ENCODE measurements at regions of chr6 and their contacts with region 1.

Region 1: DNA sequence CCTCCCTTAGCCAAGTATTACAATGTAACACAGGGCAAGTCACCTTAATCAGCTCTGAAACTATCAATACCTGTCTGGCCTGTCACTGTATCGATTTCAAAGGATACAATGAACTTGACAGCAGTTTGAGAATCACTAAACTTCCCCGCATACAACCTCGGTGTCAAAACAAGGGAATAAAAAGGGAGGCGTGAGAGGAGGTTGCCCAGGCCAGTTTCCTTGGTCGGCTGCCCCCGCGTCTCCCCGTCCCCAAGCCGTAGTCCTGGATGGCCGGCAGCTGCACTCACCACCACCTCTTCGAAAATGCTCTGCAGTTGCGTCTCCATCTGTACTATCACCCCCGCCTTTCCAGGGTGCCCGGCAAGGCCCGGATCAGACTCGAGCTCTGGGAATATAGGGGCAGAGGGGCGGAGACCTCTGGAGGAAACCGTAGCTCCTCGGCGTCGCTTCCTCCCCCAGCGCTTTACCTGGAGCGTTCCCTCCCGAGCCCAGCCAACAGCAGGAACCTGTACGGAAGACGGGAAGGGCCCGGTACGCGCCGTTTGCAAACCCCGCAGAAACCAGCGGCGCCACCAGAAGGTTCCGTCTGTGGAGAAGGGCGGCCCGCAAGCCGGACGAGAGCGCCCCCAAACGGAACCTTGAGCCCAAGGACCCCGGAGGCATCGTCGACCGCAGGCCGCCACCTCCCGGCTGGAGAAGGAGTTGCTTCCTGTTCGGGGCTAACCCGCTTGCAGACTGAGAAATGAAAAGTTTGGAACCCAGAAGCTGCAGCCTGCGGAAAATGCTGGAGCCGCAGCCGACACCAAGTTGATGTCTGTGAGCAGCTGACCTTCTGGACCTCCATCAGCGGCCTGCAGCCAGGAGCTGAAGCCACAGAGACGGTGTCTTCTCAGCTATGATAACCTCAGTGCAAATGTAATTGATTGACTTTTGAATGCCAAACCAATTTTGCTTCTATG is at the start of gene MED23:
- DNase-seq: peak; percentile 98
- ATAC-seq: peak; percentile 98
- H3K4me3 Mint-ChIP-seq: peak within 1 kb of the TSS; percentile 98
- H3K27ac Mint-ChIP-seq: peak within 1 kb of the TSS; percentile 99
- H3K4me1 Mint-ChIP-seq: peaks cover 13% of the 10 kb centered on the region
- H3K27me3 Mint-ChIP-seq: peaks cover 22% of the 10 kb centered on the region
- CTCF ChIP-seq: peak; percentile 95
- total RNA-seq, gene MED23: 18.0 to 19.0 TPM (median 18.3 TPM) in 3 replicates

Region 2: GRCh38 chr6:131159608-131160007 is 468.4 kb before region 1 on chr6:
- CTCF ChIA-PET with region 1: interaction called, 14 read pairs
- POLR2A ChIA-PET with region 1: no interaction called
- DNase-seq: no peak
- ATAC-seq: no peak
- H3K4me3 Mint-ChIP-seq: no peak overlapping the region
- H3K27ac Mint-ChIP-seq: no peak overlapping the region
- H3K4me1 Mint-ChIP-seq: peaks cover 54% of the 10 kb centered on the region
- H3K27me3 Mint-ChIP-seq: no peaks in the 10 kb centered on the region
- CTCF ChIP-seq: no peak

Region 3: DNA sequence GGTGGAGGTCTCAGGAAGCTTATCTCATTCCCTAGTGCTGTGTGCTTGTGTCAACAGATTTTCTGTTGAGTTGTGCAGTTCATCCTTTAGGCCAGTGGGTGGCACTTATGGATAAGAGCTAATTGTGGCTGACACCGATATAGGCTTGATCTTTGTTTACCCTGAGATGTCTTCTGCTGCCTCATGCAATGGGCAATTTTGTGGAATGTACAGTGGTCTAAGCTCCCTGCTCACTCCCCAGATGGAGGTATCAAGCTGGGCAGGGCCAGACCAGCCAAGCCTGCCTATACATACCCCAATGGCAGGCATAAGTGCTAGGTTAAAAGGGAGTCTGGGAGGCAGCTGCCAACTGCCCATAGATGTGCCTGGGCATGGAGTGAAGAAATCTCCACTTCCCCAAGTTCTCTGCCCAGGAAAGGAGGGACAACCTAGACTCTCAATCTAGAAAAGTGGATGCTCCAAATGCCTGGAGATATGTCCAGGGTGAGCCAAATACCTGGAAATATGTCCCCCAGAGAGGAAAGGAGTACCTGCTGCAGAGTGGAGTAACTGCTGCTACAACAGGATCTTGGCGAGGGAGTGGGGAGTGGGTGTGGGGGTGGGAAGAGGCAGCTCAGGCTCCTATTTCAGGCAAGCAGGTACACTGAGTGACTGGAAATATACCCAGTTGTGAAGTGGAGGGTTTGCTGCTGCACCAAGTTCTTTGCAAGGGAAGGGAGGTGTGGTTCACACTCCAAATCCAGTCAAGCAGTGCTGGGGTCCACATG is 108.2 kb before region 1 on chr6:
- CTCF ChIA-PET with region 1: interaction called, 15 read pairs
- POLR2A ChIA-PET with region 1: no interaction called
- DNase-seq: peak; percentile 59
- ATAC-seq: peak; percentile 98
- H3K4me3 Mint-ChIP-seq: no peak overlapping the region
- H3K27ac Mint-ChIP-seq: no peak overlapping the region
- H3K4me1 Mint-ChIP-seq: peaks cover 3% of the 10 kb centered on the region
- H3K27me3 Mint-ChIP-seq: no peaks in the 10 kb centered on the region; the same call in none of the 2 replicates
- CTCF ChIP-seq: peak; percentile 26

Region 4: GRCh38 chr6:131602781-131603312 is 25.2 kb before region 1 on chr6:
- CTCF ChIA-PET with region 1: interaction called, 11 read pairs
- POLR2A ChIA-PET with region 1: no interaction called
- DNase-seq: no peak
- ATAC-seq: no peak
- H3K4me3 Mint-ChIP-seq: no peak overlapping the region
- H3K27ac Mint-ChIP-seq: no peak overlapping the region
- H3K4me1 Mint-ChIP-seq: no peaks in the 10 kb centered on the region
- H3K27me3 Mint-ChIP-seq: no peaks in the 10 kb centered on the region
- CTCF ChIP-seq: no peak

Region 5: GRCh38 chr6:131654326-131654725 is 26.3 kb after region 1 on chr6:
- CTCF ChIA-PET with region 1: interaction called, 12 read pairs
- POLR2A ChIA-PET with region 1: interaction called, 3 read pairs
- DNase-seq: no peak
- ATAC-seq: no peak
- H3K4me3 Mint-ChIP-seq: no peak overlapping the region
- H3K27ac Mint-ChIP-seq: no peak overlapping the region
- H3K4me1 Mint-ChIP-seq: no peaks in the 10 kb centered on the region
- H3K27me3 Mint-ChIP-seq: peaks cover 39% of the 10 kb centered on the region
- CTCF ChIP-seq: no peak

Measured in WTC11 (cell line).